ENCODE measurements at regions of chr4 and their contacts with region 1.

Region 1: GRCh38 chr4:141684785-141685184 is 48.4 kb downstream of the IL15 start:
- DNase-seq: no peak
- ATAC-seq: no peak
- H3K4me3 ChIP-seq: no peak overlapping the region
- H3K27ac ChIP-seq: no peak overlapping the region
- H3K4me1 ChIP-seq: no peaks in the 10 kb centered on the region
- H3K27me3 ChIP-seq: no peaks in the 10 kb centered on the region
- CTCF ChIP-seq: no peak
- EP300 ChIP-seq: no peak
- POLR2A ChIP-seq: no peak
- RAD21 ChIP-seq: no peak

Region 2: DNA sequence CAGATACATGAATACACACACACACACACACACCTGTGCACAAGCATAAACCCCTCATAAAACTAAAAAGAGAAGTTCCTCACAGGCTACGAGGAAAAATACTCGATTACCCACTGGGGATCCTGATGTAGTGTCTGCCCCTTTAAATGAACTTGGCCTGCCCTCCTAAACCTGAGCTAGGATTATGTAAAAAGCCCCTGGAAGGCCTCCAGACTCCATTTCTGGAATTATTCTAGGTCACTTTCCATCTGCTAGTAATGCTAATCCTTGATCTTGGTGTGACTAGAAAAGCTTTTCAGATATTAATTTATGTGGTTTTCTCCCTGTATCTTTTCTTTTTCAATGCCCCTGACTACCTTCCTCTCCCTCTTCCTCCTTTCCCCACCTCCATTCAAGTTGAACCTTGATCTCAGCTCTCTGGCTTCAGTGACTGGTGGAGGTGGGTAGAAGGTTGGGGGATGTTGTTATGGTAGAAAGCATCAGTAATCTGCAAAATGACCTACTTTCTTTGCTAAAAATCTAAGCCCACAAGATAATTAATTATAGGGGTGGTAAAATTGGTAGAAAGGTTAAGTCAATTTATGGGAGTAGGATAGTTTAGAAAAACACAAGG is 489.6 kb before region 1 on chr4:
- CTCF ChIA-PET with region 1: no interaction called
- POLR2A ChIA-PET with region 1: no interaction called
- RAD21 ChIA-PET with region 1: no interaction called
- SMC1A ChIA-PET with region 1: no interaction called
- in situ Hi-C with region 1: no loop called
- intact Hi-C with region 1: no loop called
- DNase-seq: no peak
- ATAC-seq: no peak
- H3K4me3 ChIP-seq: no peak overlapping the region
- H3K27ac ChIP-seq: no peak overlapping the region
- H3K4me1 ChIP-seq: no peaks in the 10 kb centered on the region
- H3K27me3 ChIP-seq: no peaks in the 10 kb centered on the region
- CTCF ChIP-seq: no peak
- EP300 ChIP-seq: no peak
- POLR2A ChIP-seq: no peak
- RAD21 ChIP-seq: no peak

Region 3: GRCh38 chr4:141702472-141703182 is 17.8 kb after region 1 on chr4:
- CTCF ChIA-PET with region 1: interaction called, 11 read pairs
- POLR2A ChIA-PET with region 1: no interaction called
- RAD21 ChIA-PET with region 1: no interaction called
- SMC1A ChIA-PET with region 1: interaction called, 3 read pairs
- in situ Hi-C with region 1: no loop called
- intact Hi-C with region 1: no loop called
- DNase-seq: no peak
- ATAC-seq: peak; percentile 41; the same call in 2 of the 3 replicates
- H3K4me3 ChIP-seq: no peak overlapping the region
- H3K27ac ChIP-seq: no peak overlapping the region
- H3K4me1 ChIP-seq: peaks cover 5% of the 10 kb centered on the region
- H3K27me3 ChIP-seq: no peaks in the 10 kb centered on the region
- CTCF ChIP-seq: peak in 2 of 3 experiments; percentile 5 to 10; a peak in 2 of 6 replicates
- EP300 ChIP-seq: no peak
- POLR2A ChIP-seq: no peak
- RAD21 ChIP-seq: peak; percentile 29; the same call in 1 of the 2 replicates

Region 4: GRCh38 chr4:142202404-142203332 is 517.9 kb after region 1 on chr4:
- CTCF ChIA-PET with region 1: no interaction called
- POLR2A ChIA-PET with region 1: no interaction called
- RAD21 ChIA-PET with region 1: no interaction called
- SMC1A ChIA-PET with region 1: no interaction called
- in situ Hi-C with region 1: no loop called
- intact Hi-C with region 1: no loop called
- DNase-seq: peak; percentile 16
- ATAC-seq: peak; percentile 79
- H3K4me3 ChIP-seq: no peak overlapping the region
- H3K27ac ChIP-seq: no peak overlapping the region
- H3K4me1 ChIP-seq: peaks cover 3% of the 10 kb centered on the region; the same call in 1 of the 2 replicates
- H3K27me3 ChIP-seq: no peaks in the 10 kb centered on the region
- CTCF ChIP-seq: no peak
- EP300 ChIP-seq: no peak
- POLR2A ChIP-seq: no peak
- RAD21 ChIP-seq: no peak

Measured in GM12878 (cell line).